Esophagus muscularis mucosa (tissue), 4 donors: ENCODE measurements at regions of chr12 and their contacts with region 1.

Region 1: GRCh38 chr12:96985480-96986362 is 78.7 kb downstream of the NEDD1 start:
- DNase-seq: peak; percentile 80
- H3K4me3 ChIP-seq: peak overlapping the region; percentile 46 to 60 (median 50)
- H3K27ac ChIP-seq: no peak overlapping the region
- H3K4me1 ChIP-seq: peaks cover 5 to 31% (median 16%) of the 10 kb centered on the region in 4 donors
- H3K27me3 ChIP-seq: peaks cover 0 to 12% (median 0%) of the 10 kb centered on the region in 4 donors
- CTCF ChIP-seq: peak; percentile 60 to 94 (median 79)
- EP300 ChIP-seq: no peak
- POLR2A ChIP-seq: no peak

Region 2: GRCh38 chr12:96578526-96579125 is 407.1 kb before region 1 on chr12:
- intact Hi-C with region 1: loop called (anchors 5 kb)
- DNase-seq: no peak
- H3K4me3 ChIP-seq: no peak overlapping the region
- H3K27ac ChIP-seq: no peak overlapping the region
- H3K4me1 ChIP-seq: no peaks in the 10 kb centered on the region
- H3K27me3 ChIP-seq: no peaks in the 10 kb centered on the region
- CTCF ChIP-seq: peak; percentile 49 to 64 (median 61)
- EP300 ChIP-seq: no peak
- POLR2A ChIP-seq: no peak

Region 3: GRCh38 chr12:97308576-97309198 is 323.0 kb after region 1 on chr12:
- intact Hi-C with region 1: loop called (anchors 5 kb)
- DNase-seq: no peak
- H3K4me3 ChIP-seq: no peak overlapping the region
- H3K27ac ChIP-seq: no peak overlapping the region
- H3K4me1 ChIP-seq: no peaks in the 10 kb centered on the region
- H3K27me3 ChIP-seq: no peaks in the 10 kb centered on the region
- CTCF ChIP-seq: peak; percentile 71 to 86 (median 72)
- EP300 ChIP-seq: no peak
- POLR2A ChIP-seq: no peak

Region 4: DNA sequence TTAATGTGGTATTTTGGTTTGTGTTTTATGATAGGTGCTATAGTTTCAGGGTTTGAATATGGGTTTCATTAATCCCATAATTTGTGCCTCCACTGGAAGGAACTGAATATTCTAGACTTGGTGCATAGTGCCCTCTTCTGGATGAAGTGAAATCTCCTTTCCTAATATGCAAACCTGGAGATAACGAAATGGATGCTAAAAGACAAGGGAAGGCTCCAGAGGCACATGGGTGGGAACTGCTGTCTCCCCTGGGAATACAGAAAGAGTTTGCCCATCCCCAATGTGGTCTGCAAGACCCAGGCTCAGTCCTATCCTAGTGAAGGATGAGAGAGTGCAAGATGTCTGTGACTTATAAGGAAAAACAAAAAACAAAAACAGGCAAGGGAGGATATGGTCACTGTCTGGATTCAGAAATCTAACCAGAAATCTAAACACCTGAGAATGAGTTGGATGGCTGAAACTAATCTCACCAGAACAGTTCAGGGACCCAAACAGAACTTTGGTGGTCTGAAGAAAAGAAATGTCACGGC is 1387.4 kb after region 1 on chr12:
- intact Hi-C with region 1: loop called (anchors 10 kb)
- DNase-seq: no peak
- H3K4me3 ChIP-seq: no peak overlapping the region
- H3K27ac ChIP-seq: no peak overlapping the region
- H3K4me1 ChIP-seq: peaks cover 0 to 6% (median 3%) of the 10 kb centered on the region in 4 donors
- H3K27me3 ChIP-seq: no peaks in the 10 kb centered on the region
- CTCF ChIP-seq: peak; percentile 56 to 59 (median 57)
- EP300 ChIP-seq: no peak
- POLR2A ChIP-seq: no peak